Caco-2 (cell line): ENCODE measurements at regions of chr1 and their contacts with region 1.

Region 1: GRCh38 chr1:51189421-51190073 is 46.5 kb upstream of the RNF11 start:
- DNase-seq: peak in 1 of 2 experiments; percentile 41
- H3K4me3 ChIP-seq: no peak overlapping the region
- H3K4me3 Mint-ChIP-seq: no peak overlapping the region
- H3K27ac Mint-ChIP-seq: no peak overlapping the region
- H3K4me1 ChIP-seq: no peaks in the 10 kb centered on the region
- H3K4me1 Mint-ChIP-seq: no peaks in the 10 kb centered on the region
- H3K27me3 ChIP-seq: no peaks in the 10 kb centered on the region
- H3K27me3 Mint-ChIP-seq: no peaks in the 10 kb centered on the region
- CTCF ChIP-seq: peak; percentile 65 to 75

Region 2: GRCh38 chr1:50368179-50369012 is 821.2 kb before region 1 on chr1:
- CTCF ChIA-PET with region 1: no interaction called
- POLR2A ChIA-PET with region 1: no interaction called
- intact Hi-C with region 1: loop called (anchors 2 kb)
- DNase-seq: peak in 1 of 2 experiments; percentile 62
- H3K4me3 ChIP-seq: no peak overlapping the region
- H3K4me3 Mint-ChIP-seq: no peak overlapping the region
- H3K27ac Mint-ChIP-seq: no peak overlapping the region
- H3K4me1 ChIP-seq: no peaks in the 10 kb centered on the region
- H3K4me1 Mint-ChIP-seq: no peaks in the 10 kb centered on the region
- H3K27me3 ChIP-seq: no peaks in the 10 kb centered on the region
- H3K27me3 Mint-ChIP-seq: peaks cover 13% of the 10 kb centered on the region
- CTCF ChIP-seq: peak; percentile 57 to 90

Region 3: GRCh38 chr1:50750021-50750619 is 439.4 kb before region 1 on chr1:
- CTCF ChIA-PET with region 1: no interaction called
- POLR2A ChIA-PET with region 1: no interaction called
- intact Hi-C with region 1: loop called (anchors 1 kb)
- DNase-seq: peak in 1 of 2 experiments; percentile 17
- H3K4me3 ChIP-seq: no peak overlapping the region
- H3K4me3 Mint-ChIP-seq: no peak overlapping the region
- H3K27ac Mint-ChIP-seq: no peak overlapping the region
- H3K4me1 ChIP-seq: no peaks in the 10 kb centered on the region
- H3K4me1 Mint-ChIP-seq: no peaks in the 10 kb centered on the region
- H3K27me3 ChIP-seq: no peaks in the 10 kb centered on the region
- H3K27me3 Mint-ChIP-seq: no peaks in the 10 kb centered on the region
- CTCF ChIP-seq: peak; percentile 21 to 43

Region 4: GRCh38 chr1:50774759-50775351 is 414.7 kb before region 1 on chr1:
- CTCF ChIA-PET with region 1: interaction called, 10 read pairs
- POLR2A ChIA-PET with region 1: no interaction called
- intact Hi-C with region 1: loop called (anchors 1 kb)
- DNase-seq: peak in 1 of 2 experiments; percentile 21
- H3K4me3 ChIP-seq: no peak overlapping the region
- H3K4me3 Mint-ChIP-seq: no peak overlapping the region
- H3K27ac Mint-ChIP-seq: no peak overlapping the region
- H3K4me1 ChIP-seq: no peaks in the 10 kb centered on the region
- H3K4me1 Mint-ChIP-seq: peaks cover 6% of the 10 kb centered on the region
- H3K27me3 ChIP-seq: no peaks in the 10 kb centered on the region
- H3K27me3 Mint-ChIP-seq: no peaks in the 10 kb centered on the region
- CTCF ChIP-seq: peak; percentile 44 to 64

Region 5: GRCh38 chr1:50873458-50874187 is 315.9 kb before region 1 on chr1:
- CTCF ChIA-PET with region 1: no interaction called
- POLR2A ChIA-PET with region 1: no interaction called
- intact Hi-C with region 1: loop called (anchors 1 kb)
- DNase-seq: peak; percentile 53 to 60
- H3K4me3 ChIP-seq: no peak overlapping the region
- H3K4me3 Mint-ChIP-seq: no peak overlapping the region
- H3K27ac Mint-ChIP-seq: no peak overlapping the region
- H3K4me1 ChIP-seq: no peaks in the 10 kb centered on the region
- H3K4me1 Mint-ChIP-seq: no peaks in the 10 kb centered on the region
- H3K27me3 ChIP-seq: no peaks in the 10 kb centered on the region
- H3K27me3 Mint-ChIP-seq: no peaks in the 10 kb centered on the region
- CTCF ChIP-seq: peak; percentile 38 to 45

Region 6: GRCh38 chr1:50929376-50929958 is 260.1 kb before region 1 on chr1:
- CTCF ChIA-PET with region 1: interaction called, 6 read pairs
- POLR2A ChIA-PET with region 1: no interaction called
- intact Hi-C with region 1: loop called (anchors 2 kb)
- DNase-seq: no peak
- H3K4me3 ChIP-seq: no peak overlapping the region
- H3K4me3 Mint-ChIP-seq: no peak overlapping the region
- H3K27ac Mint-ChIP-seq: no peak overlapping the region
- H3K4me1 ChIP-seq: no peaks in the 10 kb centered on the region
- H3K4me1 Mint-ChIP-seq: no peaks in the 10 kb centered on the region
- H3K27me3 ChIP-seq: no peaks in the 10 kb centered on the region
- H3K27me3 Mint-ChIP-seq: no peaks in the 10 kb centered on the region
- CTCF ChIP-seq: peak; percentile 32 to 38

Region 7: GRCh38 chr1:51088488-51088887 is 101.1 kb before region 1 on chr1:
- CTCF ChIA-PET with region 1: interaction called, 6 read pairs
- POLR2A ChIA-PET with region 1: no interaction called
- intact Hi-C with region 1: loop called (anchors 1 kb)
- DNase-seq: no peak
- H3K4me3 ChIP-seq: no peak overlapping the region
- H3K4me3 Mint-ChIP-seq: no peak overlapping the region
- H3K27ac Mint-ChIP-seq: no peak overlapping the region
- H3K4me1 ChIP-seq: no peaks in the 10 kb centered on the region
- H3K4me1 Mint-ChIP-seq: no peaks in the 10 kb centered on the region
- H3K27me3 ChIP-seq: no peaks in the 10 kb centered on the region
- H3K27me3 Mint-ChIP-seq: peaks cover 27% of the 10 kb centered on the region
- CTCF ChIP-seq: peak in 1 of 2 experiments; percentile 12